ENCODE measurements at regions of chr11 and their contacts with region 1.

Region 1: GRCh38 chr11:62427630-62428233 is 8.9 kb downstream of the SCGB1A1 start:
- DNase-seq: no peak
- ATAC-seq: no peak
- H3K4me3 ChIP-seq: no peak overlapping the region
- H3K27ac ChIP-seq: peak overlapping the region; percentile 55 to 86
- H3K4me1 ChIP-seq: peaks cover 48% of the 10 kb centered on the region
- CTCF ChIP-seq: no peak
- EP300 ChIP-seq: no peak
- POLR2A ChIP-seq: no peak
- RAD21 ChIP-seq: no peak

Region 2: GRCh38 chr11:62324738-62325556 is 102.8 kb before region 1 on chr11:
- CTCF ChIA-PET with region 1: no interaction called
- POLR2A ChIA-PET with region 1: no interaction called
- DNase-seq: peak; percentile 15 to 52
- ATAC-seq: peak; percentile 66 to 94
- H3K4me3 ChIP-seq: no peak overlapping the region
- H3K27ac ChIP-seq: no peak overlapping the region; a peak in 1 of 6 replicates
- H3K4me1 ChIP-seq: peaks cover 18% of the 10 kb centered on the region
- CTCF ChIP-seq: no peak
- EP300 ChIP-seq: no peak
- POLR2A ChIP-seq: no peak
- RAD21 ChIP-seq: peak in 1 of 2 experiments; percentile 53; a peak in 2 of 5 replicates

Region 3: DNA sequence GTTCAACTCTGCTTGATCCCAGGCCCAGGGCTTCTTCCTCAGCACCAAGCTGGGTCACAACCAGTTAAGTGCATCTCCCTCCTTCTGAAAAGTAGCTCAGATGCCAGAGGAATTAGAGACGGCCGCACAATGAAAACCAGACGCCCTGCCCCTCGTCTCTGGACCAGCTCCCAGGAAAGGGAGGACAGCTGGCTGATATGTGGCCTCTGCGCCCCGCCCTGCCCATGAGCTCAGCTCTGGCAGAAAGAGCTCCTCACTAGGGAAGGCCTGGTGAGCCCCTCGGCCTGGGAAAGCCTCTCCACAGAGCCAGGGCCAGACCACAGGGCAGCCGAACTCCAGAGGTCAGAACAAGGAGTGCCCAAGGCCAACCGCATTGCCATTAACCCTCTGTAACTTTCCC is 27.0 kb before region 1 on chr11:
- CTCF ChIA-PET with region 1: interaction called, 74 read pairs
- POLR2A ChIA-PET with region 1: no interaction called
- DNase-seq: no peak
- ATAC-seq: no peak
- H3K4me3 ChIP-seq: no peak overlapping the region
- H3K27ac ChIP-seq: peak overlapping the region in 1 of 2 experiments; percentile 48; a peak in 2 of 6 replicates
- H3K4me1 ChIP-seq: peaks cover 22% of the 10 kb centered on the region
- CTCF ChIP-seq: no peak
- EP300 ChIP-seq: no peak
- POLR2A ChIP-seq: no peak
- RAD21 ChIP-seq: no peak

Region 4: GRCh38 chr11:62444236-62444833 is 16.6 kb after region 1 on chr11:
- CTCF ChIA-PET with region 1: interaction called, 20 read pairs
- POLR2A ChIA-PET with region 1: no interaction called
- DNase-seq: no peak
- ATAC-seq: no peak
- H3K4me3 ChIP-seq: no peak overlapping the region
- H3K27ac ChIP-seq: peak overlapping the region in 1 of 2 experiments; percentile 27; a peak in 1 of 6 replicates
- H3K4me1 ChIP-seq: peaks cover 23% of the 10 kb centered on the region
- CTCF ChIP-seq: no peak
- EP300 ChIP-seq: no peak
- POLR2A ChIP-seq: no peak
- RAD21 ChIP-seq: no peak

Region 5: DNA sequence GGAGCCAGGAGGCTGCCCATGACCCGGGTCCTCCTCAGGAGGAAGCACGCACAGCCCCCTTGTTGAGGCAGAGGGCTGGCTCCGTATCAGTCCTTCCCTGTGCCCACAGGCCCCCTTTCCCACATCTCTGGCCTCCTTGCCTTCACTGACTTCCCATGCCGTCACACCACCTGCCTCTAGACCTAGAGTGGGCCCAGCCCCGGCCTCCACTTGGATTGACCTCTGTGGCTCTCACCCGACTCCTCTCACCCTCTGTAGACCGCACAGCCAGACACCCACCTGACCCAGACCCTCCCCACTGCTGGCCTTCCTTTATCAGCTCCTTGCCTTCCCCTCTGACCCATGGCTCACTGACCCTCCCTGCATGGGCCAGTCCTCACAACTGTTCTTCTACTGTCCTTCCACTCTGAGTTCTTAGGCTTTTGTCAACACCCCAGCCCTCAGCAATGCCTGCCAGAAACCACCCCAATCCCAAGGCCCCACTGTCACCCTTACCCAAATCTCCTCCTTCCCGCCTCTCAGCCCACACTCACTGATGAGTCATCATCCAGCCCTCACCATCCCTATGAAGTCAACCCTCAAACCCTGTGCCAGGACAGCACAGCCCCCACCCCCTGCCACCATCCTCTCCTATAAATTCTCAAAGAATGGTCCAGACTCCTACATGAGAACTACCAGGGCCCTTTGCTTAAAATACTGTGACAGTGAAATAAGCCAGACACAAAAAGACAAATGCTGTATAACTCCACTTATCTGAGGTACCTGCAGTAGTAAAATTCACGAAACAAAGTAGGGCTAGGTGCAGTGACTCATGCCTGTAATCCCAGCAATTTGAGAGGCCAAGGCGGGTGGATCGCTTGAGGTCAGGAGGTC is 44.5 kb after region 1 on chr11:
- CTCF ChIA-PET with region 1: interaction called, 22 read pairs
- POLR2A ChIA-PET with region 1: no interaction called
- DNase-seq: peak; percentile 54 to 57
- ATAC-seq: peak; percentile 76 to 87
- H3K4me3 ChIP-seq: no peak overlapping the region
- H3K27ac ChIP-seq: peak overlapping the region; percentile 37 to 88; a peak in 5 of 6 replicates
- H3K4me1 ChIP-seq: peaks cover 29% of the 10 kb centered on the region
- CTCF ChIP-seq: no peak
- EP300 ChIP-seq: 0 out of 5 replicates have a peak, but pooled peaks of 1 of the 2 experiments have one; percentile 8
- POLR2A ChIP-seq: no peak
- RAD21 ChIP-seq: no peak

Region 6: GRCh38 chr11:62497132-62497915 is 69.6 kb after region 1 on chr11:
- CTCF ChIA-PET with region 1: interaction called, 23 read pairs
- POLR2A ChIA-PET with region 1: interaction called, 3 read pairs
- DNase-seq: peak; percentile 75 to 85
- ATAC-seq: peak; percentile 91 to 96
- H3K4me3 ChIP-seq: no peak overlapping the region
- H3K27ac ChIP-seq: peak overlapping the region; percentile 21 to 65; a peak in 4 of 6 replicates
- H3K4me1 ChIP-seq: peaks cover 29% of the 10 kb centered on the region
- CTCF ChIP-seq: peak; percentile 71
- EP300 ChIP-seq: no peak
- POLR2A ChIP-seq: no peak
- RAD21 ChIP-seq: peak; percentile 82 to 84

Region 7: GRCh38 chr11:62514151-62514550 is 86.4 kb after region 1 on chr11:
- CTCF ChIA-PET with region 1: interaction called, 20 read pairs
- POLR2A ChIA-PET with region 1: no interaction called
- DNase-seq: no peak
- ATAC-seq: peak in 1 of 2 experiments; percentile 14; a peak in 1 of 6 replicates
- H3K4me3 ChIP-seq: no peak overlapping the region
- H3K27ac ChIP-seq: no peak overlapping the region; a peak in 1 of 6 replicates
- H3K4me1 ChIP-seq: peaks cover 28% of the 10 kb centered on the region
- CTCF ChIP-seq: no peak
- EP300 ChIP-seq: no peak
- POLR2A ChIP-seq: no peak
- RAD21 ChIP-seq: no peak

Region 8: DNA sequence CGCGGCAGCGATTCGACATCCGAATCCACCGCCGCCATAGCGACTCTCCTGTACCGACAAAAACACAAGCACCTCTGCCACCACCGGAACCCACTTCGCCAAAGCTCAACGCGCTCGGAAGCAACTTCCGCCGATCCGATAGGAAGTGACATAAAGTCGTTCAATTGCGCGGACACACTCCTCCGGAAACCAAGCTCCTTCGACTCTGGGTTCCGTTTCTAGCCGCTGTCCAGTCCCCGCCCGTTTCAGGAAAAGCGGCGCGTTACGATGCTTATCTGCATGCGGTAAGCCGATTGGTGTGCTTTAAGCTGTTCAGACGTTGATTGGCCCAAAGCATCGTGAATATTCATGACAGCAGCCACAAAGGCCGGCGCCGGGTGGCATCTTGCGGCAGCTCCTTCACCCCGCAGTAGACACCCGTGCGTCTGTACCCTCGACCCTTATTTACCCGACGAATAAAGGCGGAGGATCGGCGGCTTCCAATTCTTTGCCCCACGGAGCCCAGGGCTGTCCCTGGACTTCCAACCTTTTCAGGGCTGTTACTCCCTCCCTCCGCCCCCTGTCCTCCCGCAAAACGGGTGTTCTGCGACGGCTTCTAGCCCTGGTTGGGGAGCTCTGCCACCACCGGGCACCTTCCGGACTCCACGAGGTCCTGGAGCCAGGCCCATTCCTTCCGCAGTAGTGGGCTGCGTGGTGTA is 163.9 kb after region 1 on chr11 and contains the start of gene TUT1:
- CTCF ChIA-PET with region 1: interaction called, 8 read pairs
- POLR2A ChIA-PET with region 1: interaction called, 15 read pairs
- DNase-seq: peak; percentile 96 to 100
- ATAC-seq: peak; percentile 89 to 95
- H3K4me3 ChIP-seq: peak within 1 kb of the TSS; percentile 79
- H3K27ac ChIP-seq: peak within 1 kb of the TSS; percentile 90 to 91
- H3K4me1 ChIP-seq: peaks cover 49% of the 10 kb centered on the region
- CTCF ChIP-seq: no peak
- EP300 ChIP-seq: no peak
- POLR2A ChIP-seq: peak; percentile 87
- RAD21 ChIP-seq: no peak; a peak in 1 of 5 replicates
- polyA plus RNA-seq, gene TUT1: 12.9 and 15.5 TPM in 2 replicates

Measured in A549 (cell line).